Common myeloid progenitor, CD34-positive (primary cell): ENCODE measurements at regions of chr3 and their contacts with region 1.

Region 1: DNA sequence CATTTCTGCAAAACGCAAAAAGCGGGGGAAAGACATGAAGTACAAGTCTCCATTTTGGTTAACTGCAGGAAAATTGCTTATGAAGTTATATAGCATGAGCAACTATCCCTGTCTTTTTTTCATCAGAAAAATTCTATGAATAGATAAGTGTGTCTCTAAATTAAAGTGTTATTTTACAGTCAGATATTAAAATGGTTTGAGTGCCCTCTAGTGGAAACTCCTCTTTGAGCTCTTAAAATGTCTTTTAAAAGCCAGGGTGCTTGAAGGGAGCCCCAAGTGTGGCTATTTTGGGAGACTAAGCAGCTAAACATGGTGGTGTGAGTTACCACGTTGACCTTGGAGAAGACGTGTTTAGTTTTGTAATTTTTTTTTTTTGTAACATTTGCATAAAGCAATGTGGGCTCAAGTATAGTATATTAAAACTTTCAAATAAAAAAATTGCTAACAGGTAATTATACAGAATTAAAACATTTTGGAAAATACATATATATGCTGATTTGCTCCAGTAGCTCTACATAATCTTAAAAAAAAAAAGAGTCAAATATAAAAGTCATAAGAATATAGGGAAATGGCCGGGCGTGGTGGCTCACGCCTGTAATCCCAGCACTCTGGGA is 77.2 kb downstream of the PPP2R3A start:
- DNase-seq: peak; percentile 46 to 75 (median 69)
- H3K4me3 ChIP-seq: no peak overlapping the region
- H3K27ac ChIP-seq: no peak overlapping the region
- H3K4me1 ChIP-seq: no peaks in the 10 kb centered on the region
- H3K27me3 ChIP-seq: no peaks in the 10 kb centered on the region

Region 2: GRCh38 chr3:135895106-135895733 is 147.5 kb before region 1 on chr3:
- CTCF ChIA-PET with region 1: interaction called, 17 read pairs
- POLR2A ChIA-PET with region 1: no interaction called
- DNase-seq: peak; percentile 57 to 72 (median 65)
- H3K4me3 ChIP-seq: no peak overlapping the region
- H3K27ac ChIP-seq: no peak overlapping the region
- H3K4me1 ChIP-seq: no peaks in the 10 kb centered on the region
- H3K27me3 ChIP-seq: peaks cover 0 to 4% (median 0%) of the 10 kb centered on the region in 5 experiments

Region 3: GRCh38 chr3:135918580-135918962 is 124.1 kb before region 1 on chr3:
- CTCF ChIA-PET with region 1: interaction called, 95 read pairs
- POLR2A ChIA-PET with region 1: interaction called, 4 read pairs
- DNase-seq: peak; percentile 9 to 37 (median 37)
- H3K4me3 ChIP-seq: no peak overlapping the region
- H3K27ac ChIP-seq: no peak overlapping the region
- H3K4me1 ChIP-seq: no peaks in the 10 kb centered on the region
- H3K27me3 ChIP-seq: no peaks in the 10 kb centered on the region

Region 4: DNA sequence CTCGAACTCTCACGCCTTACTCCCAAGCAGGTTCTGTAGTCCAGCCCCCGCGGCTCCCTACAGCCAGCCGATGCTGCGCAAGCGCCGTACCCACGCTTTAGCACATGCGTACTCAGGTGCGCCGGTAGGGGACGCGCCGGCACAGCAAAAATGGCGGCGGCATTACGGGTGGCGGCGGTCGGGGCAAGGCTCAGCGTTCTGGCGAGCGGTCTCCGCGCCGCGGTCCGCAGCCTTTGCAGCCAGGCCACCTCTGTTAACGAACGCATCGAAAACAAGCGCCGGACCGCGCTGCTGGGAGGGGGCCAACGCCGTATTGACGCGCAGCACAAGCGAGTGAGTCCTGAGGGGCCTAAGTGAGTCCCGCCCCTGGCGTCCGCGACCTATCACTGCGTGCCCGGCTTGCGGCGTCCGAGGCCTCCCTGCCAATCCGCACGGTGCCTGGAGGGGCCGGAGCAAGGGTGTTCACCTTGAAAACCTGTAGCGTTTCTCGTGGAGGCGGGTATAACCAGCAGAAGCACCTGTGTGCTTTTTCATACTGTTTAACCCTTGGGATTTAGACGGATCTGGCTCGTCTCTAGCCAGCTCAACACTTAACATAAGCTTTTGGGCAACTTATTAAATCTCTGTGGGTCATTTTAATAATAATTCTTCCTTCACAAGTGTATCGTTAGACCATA is 207.6 kb after region 1 on chr3 and contains the start of gene PCCB:
- CTCF ChIA-PET with region 1: no interaction called
- POLR2A ChIA-PET with region 1: no interaction called
- DNase-seq: peak; percentile 94 to 95 (median 95)
- H3K4me3 ChIP-seq: peak within 1 kb of the TSS; percentile 46 to 80 (median 71)
- H3K27ac ChIP-seq: peak within 1 kb of the TSS; percentile 58 to 85
- H3K4me1 ChIP-seq: peaks cover 10 to 26% (median 23%) of the 10 kb centered on the region in 4 experiments
- H3K27me3 ChIP-seq: no peaks in the 10 kb centered on the region